ENCODE measurements at regions of chr13 and their contacts with region 1.

Region 1: DNA sequence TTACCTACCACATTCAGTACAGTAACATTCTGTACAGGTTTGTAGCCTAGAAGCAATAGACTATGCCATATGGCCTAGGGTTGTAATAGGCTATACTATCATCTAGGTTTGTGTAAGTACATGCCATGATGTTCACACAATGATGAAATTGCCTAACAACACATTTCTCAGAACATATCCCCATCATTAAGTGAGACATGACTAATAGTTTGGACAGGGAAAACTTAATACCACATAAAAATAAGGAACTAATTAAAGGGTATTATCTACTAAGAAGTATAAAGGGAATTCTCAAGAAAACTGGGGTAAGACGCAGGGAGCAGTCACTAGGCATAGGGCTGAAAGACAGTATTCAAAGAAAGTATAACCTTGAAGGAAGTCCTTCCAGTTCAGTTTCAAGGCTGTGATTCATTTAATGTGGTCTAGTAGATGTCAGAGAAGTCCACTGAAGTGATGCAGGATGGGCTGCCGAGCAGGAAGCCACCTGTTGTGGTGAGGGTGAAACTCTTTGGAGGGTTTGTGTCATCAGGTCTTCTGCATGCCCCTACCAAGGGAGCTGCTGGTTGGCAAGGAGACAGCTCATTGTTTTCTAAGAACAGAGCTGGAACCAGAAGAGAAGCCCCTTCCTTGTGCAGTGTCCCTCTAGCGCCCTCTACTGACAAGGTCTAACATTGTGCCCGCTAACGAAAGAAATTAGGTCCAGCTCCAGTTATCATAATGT is 122.9 kb downstream of the OLFM4 start:
- DNase-seq: peak; percentile 61
- ATAC-seq: peak; percentile 97
- H3K4me3 Mint-ChIP-seq: no peak overlapping the region
- H3K27ac Mint-ChIP-seq: no peak overlapping the region
- H3K4me1 Mint-ChIP-seq: peaks cover 3% of the 10 kb centered on the region
- H3K27me3 Mint-ChIP-seq: peaks cover 6% of the 10 kb centered on the region

Region 2: DNA sequence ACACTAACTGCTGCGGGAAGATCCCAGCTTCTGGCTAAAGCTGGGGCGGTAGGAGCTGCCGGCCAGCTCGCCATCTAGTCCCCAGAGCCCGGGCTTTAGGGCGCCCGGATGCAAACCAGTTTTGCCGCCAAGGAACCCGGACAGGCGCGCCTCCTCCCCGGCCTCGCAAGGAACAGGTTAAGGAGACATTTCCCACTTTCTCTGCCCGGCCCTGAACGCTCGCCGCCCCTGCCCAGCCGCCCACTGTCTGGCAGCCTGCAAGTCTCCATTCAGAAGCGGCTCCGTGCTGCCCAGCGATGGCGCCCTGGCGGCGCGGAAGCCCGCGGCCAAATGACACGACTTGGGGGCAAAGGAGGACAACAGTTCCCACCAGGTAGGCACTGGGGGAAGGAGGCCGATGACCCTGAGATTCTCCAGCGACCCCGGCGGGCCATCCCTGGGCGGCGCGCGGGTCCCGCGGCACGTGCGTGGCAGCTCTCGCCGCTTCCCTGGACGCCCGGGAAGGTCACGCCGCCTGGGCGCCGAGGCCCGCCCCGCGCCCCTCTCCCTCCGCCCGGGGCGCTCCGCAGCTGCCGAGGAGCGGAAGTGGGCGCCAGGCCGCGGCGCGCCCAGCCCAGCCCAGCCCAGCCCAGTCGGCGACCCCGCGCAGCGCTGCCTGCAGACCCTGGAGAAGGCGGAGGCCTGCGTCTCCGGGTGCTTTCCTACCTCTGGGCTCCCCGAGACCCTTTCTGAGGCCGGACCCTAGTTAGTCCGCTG is 551.5 kb before region 1 on chr13:
- CTCF ChIA-PET with region 1: no interaction called
- POLR2A ChIA-PET with region 1: no interaction called
- intact Hi-C with region 1: loop called in 1 of 2 experiments (anchors 10 kb)
- DNase-seq: peak; percentile 34
- ATAC-seq: peak; percentile 69
- H3K4me3 Mint-ChIP-seq: peak overlapping the region; percentile 61
- H3K27ac Mint-ChIP-seq: no peak overlapping the region
- H3K4me1 Mint-ChIP-seq: peaks cover 5% of the 10 kb centered on the region
- H3K27me3 Mint-ChIP-seq: peaks cover 17% of the 10 kb centered on the region

Measured in activated CD4-positive, alpha-beta T cell treated with anti-CD3 and anti-CD28 coated beads for 36 hours (primary cell).